WTC11 (cell line): ENCODE measurements at regions of chr19 and their contacts with region 1.

Region 1: GRCh38 chr19:46016426-46017094 is 6.3 kb downstream of the PGLYRP1 start:
- DNase-seq: peak; percentile 89
- ATAC-seq: peak; percentile 66
- H3K4me3 Mint-ChIP-seq: peak overlapping the region; percentile 87
- H3K27ac Mint-ChIP-seq: peak overlapping the region; percentile 45; the same call in 1 of the 2 replicates
- H3K4me1 Mint-ChIP-seq: peaks cover 21% of the 10 kb centered on the region
- H3K27me3 Mint-ChIP-seq: peaks cover 31% of the 10 kb centered on the region
- CTCF ChIP-seq: peak; percentile 81

Region 2: GRCh38 chr19:45862564-45863334 is 153.8 kb before region 1 on chr19 and contains the start of gene SYMPK:
- CTCF ChIA-PET with region 1: interaction called, 13 read pairs
- POLR2A ChIA-PET with region 1: no interaction called
- DNase-seq: peak; percentile 99
- ATAC-seq: peak; percentile 93
- H3K4me3 Mint-ChIP-seq: peak within 1 kb of the TSS; percentile 89
- H3K27ac Mint-ChIP-seq: peak within 1 kb of the TSS; percentile 99
- H3K4me1 Mint-ChIP-seq: peaks cover 40% of the 10 kb centered on the region
- H3K27me3 Mint-ChIP-seq: no peaks in the 10 kb centered on the region
- CTCF ChIP-seq: no peak
- total RNA-seq, gene SYMPK: 105 to 111 TPM (median 106 TPM) in 3 replicates

Region 3: DNA sequence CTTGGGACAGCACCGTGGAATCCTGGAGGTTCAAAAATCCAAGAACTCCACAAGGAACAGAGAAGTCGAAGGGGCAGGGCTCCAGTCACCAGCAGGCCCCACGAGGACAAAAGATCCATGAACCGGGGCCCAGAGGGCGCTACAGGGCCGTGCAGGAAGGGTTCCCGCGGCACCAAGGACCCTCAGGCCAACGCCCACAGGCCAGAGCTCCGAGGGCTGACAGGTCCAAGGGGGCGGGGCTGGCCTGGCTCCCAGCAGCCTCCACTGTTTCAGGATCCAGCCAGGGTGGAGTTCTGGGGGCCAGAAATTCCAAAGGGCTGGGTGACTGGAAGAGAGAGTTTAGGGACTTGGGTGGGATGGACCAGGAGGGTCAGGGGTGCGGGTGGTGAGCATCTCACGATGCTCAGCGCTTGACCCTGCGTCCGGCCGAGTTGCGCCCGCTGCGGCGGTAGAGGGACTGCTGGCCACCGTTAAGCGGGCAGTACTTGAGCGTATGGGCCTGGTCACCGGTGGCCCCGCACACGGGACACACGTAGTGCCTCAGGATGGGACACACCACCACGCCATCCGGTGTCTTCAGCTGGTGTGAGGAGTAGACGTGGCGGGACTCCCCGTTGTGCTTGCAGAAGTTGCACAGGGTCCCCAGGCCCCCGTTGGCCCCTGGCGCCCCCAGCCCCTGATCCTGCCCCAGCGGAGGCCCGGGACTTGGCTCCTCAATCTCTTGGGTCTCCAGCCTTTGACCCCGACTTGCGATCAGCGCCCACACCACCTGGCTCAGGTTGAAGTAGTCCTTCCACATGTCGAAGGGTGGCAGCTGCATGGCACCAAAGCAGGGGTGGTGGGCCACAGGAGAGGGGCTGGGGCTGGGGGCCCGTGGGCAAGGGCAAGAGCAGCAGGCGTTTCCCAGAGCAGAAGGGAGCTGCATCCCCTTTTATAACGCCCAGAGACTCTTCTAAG is 102.4 kb before region 1 on chr19 and contains the start of gene NANOS2:
- CTCF ChIA-PET with region 1: interaction called, 25 read pairs
- POLR2A ChIA-PET with region 1: interaction called, 6 read pairs
- DNase-seq: peak; percentile 94
- ATAC-seq: peak; percentile 98
- H3K4me3 Mint-ChIP-seq: no peak within 1 kb of the TSS
- H3K27ac Mint-ChIP-seq: no peak within 1 kb of the TSS
- H3K4me1 Mint-ChIP-seq: no peaks in the 10 kb centered on the region
- H3K27me3 Mint-ChIP-seq: peaks cover 7% of the 10 kb centered on the region
- CTCF ChIP-seq: no peak
- total RNA-seq, gene NANOS2: 0.13 to 0.18 TPM in 2 of 3 replicates, not detected in the other

Region 4: GRCh38 chr19:45927565-45928261 is 88.8 kb before region 1 on chr19:
- CTCF ChIA-PET with region 1: interaction called, 19 read pairs
- POLR2A ChIA-PET with region 1: interaction called, 3 read pairs
- DNase-seq: peak; percentile 95
- ATAC-seq: peak; percentile 99
- H3K4me3 Mint-ChIP-seq: peak overlapping the region; percentile 63
- H3K27ac Mint-ChIP-seq: no peak overlapping the region
- H3K4me1 Mint-ChIP-seq: peaks cover 8% of the 10 kb centered on the region
- H3K27me3 Mint-ChIP-seq: peaks cover 66% of the 10 kb centered on the region
- CTCF ChIP-seq: no peak

Region 5: DNA sequence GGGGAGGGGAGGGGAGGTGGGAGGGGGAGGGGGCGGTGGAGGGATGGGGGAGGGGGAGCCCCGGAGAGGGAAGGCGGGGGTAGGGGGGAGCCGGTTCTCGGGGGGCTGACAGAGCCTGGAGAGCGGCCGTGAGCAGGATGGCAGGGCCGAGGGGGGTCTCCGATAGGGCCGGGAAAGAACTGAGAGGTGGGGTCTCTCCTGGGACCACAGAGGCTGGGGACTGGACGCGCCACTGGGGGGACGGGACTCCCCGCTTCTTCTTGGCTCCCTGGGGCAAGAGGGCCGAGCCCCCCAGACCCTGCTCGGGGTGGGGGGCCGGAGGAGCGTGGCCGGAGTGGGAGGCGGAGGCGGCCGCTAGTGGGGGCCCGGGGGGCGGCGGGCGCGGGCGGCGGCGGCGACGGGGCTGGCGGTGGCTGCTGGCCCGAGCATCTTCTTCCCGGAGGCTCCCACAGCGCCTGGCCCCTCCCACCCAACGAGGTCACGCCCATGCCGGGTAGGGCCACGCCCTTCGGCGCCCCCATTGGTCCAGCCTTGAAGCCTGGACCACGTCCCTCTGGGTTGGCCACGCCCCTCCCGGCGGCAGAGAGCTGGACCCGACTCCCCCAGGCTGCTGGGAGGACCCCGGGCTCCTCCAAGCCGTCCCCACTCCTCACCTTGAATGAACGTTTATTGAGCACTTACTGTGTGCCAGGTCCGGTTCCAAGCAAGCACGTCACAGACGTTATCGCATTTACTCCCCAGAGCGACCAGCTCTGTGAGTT is 42.8 kb before region 1 on chr19 and contains the start of gene NOVA2:
- CTCF ChIA-PET with region 1: interaction called, 13 read pairs
- POLR2A ChIA-PET with region 1: no interaction called
- DNase-seq: peak; percentile 99
- ATAC-seq: peak; percentile 99
- H3K4me3 Mint-ChIP-seq: peak within 1 kb of the TSS; percentile 61
- H3K27ac Mint-ChIP-seq: no peak within 1 kb of the TSS
- H3K4me1 Mint-ChIP-seq: peaks cover 16% of the 10 kb centered on the region
- H3K27me3 Mint-ChIP-seq: peaks cover 87% of the 10 kb centered on the region
- CTCF ChIP-seq: no peak
- total RNA-seq, gene NOVA2: 11.3 to 15.6 TPM (median 15.4 TPM) in 3 replicates

Region 6: DNA sequence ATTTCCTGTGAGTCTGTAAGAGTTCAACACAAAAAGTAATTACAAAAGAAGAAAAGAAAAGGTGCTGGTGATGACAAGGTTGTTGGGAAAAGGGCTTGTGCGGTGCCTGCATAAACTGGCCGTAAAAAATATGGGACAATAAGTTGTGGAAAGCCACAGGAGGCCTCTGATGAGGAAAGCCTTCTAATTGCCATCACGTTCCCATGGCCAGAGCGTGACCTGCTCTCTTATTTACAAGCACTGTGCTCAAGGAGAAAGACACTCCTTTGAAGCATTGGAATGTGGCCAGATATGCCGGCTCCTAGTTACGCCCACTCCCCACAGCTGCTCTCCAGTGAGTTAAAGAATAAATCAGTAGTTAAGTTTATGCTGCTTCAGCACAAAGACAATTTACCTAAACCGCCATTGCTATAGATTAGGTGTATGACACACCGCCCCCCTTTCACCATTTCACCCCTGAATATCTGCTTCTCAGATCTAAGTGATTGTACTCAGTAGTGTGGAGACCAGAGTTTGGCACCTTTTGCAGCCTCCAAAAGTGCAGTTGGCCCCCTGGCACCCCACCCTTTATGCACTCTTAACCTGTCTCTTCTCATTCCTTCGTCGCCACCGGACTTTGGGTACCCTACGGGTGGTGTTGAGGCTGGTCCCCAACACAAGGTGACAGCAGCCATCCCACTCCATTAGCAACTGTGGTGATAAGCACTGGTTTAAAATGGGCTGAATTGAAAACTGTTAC is 14.4 kb after region 1 on chr19:
- CTCF ChIA-PET with region 1: interaction called, 76 read pairs
- POLR2A ChIA-PET with region 1: no interaction called
- DNase-seq: no peak
- ATAC-seq: no peak
- H3K4me3 Mint-ChIP-seq: no peak overlapping the region
- H3K27ac Mint-ChIP-seq: no peak overlapping the region
- H3K4me1 Mint-ChIP-seq: no peaks in the 10 kb centered on the region
- H3K27me3 Mint-ChIP-seq: no peaks in the 10 kb centered on the region; the same call in 1 of the 2 replicates
- CTCF ChIP-seq: no peak

Region 7: DNA sequence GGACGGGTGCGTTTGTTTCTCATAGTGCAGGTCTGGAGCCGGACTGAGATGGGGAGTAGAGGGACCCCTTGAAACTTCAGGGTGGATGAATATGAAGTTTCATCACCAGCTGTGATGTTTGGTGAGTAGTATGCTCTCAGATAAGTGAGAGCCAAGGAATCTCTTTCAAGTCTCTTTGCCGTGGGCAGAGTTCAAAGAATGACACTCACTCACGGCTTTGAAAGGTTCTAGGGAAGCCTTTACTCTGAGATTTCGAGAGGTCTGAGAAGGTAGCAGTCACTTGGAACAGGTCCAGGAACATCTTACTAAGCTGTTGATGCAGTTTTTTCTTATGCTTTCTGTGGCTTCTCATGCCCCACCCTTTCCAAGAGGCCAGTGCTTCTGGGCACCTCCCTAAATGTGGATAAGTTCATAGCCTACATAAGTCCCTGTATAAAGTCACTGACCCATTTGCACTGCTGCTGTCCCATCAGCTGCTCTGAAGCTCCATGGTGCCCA is 131.3 kb after region 1 on chr19 and contains the start of gene IGFL2:
- CTCF ChIA-PET with region 1: no interaction called
- POLR2A ChIA-PET with region 1: no interaction called
- DNase-seq: no peak
- ATAC-seq: no peak
- H3K4me3 Mint-ChIP-seq: no peak within 1 kb of the TSS
- H3K27ac Mint-ChIP-seq: no peak within 1 kb of the TSS
- H3K4me1 Mint-ChIP-seq: 0 out of 2 replicates have a peak, but pooled peaks cover 6% of the 10 kb centered on the region
- H3K27me3 Mint-ChIP-seq: peaks cover 18% of the 10 kb centered on the region
- CTCF ChIP-seq: no peak
- total RNA-seq, gene IGFL2: not detected in 3 replicates